Common myeloid progenitor, CD34-positive (primary cell): ENCODE measurements at regions of chr19 and their contacts with region 1.

Region 1: GRCh38 chr19:54390942-54391577 is 24.2 kb upstream of the TTYH1 start:
- DNase-seq: peak; percentile 85 to 91 (median 87)
- H3K4me3 ChIP-seq: peak overlapping the region in 2 of 7 experiments; percentile 0 to 8
- H3K27ac ChIP-seq: no peak overlapping the region
- H3K4me1 ChIP-seq: peaks cover 21 to 50% (median 46%) of the 10 kb centered on the region in 4 experiments
- H3K27me3 ChIP-seq: no peaks in the 10 kb centered on the region

Region 2: DNA sequence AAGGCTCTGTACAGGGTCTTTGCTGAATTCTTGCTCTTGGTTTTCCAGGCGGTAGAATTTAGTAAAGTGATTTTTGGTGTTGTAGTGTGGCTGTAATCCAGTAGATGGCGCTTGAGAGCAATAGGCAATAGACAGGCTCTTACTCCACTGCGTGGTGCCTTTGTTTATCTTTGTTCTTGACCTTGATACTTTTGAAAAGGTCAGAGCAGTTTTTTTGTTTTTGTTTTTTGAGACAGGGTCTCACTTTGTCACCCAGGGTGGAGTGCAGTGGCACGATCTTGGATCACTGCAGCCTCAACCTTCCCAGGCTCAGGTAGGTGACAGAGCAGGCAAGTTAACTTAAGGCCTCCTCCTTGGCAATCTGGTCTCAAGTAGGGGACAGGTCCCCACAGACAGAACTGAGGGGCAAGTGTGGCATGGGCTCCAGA is 65.9 kb before region 1 on chr19:
- CTCF ChIA-PET with region 1: interaction called, 86 read pairs
- POLR2A ChIA-PET with region 1: no interaction called
- DNase-seq: peak; percentile 58 to 81 (median 68)
- H3K4me3 ChIP-seq: no peak overlapping the region
- H3K27ac ChIP-seq: no peak overlapping the region
- H3K4me1 ChIP-seq: peaks cover 0 to 21% (median 8%) of the 10 kb centered on the region in 4 experiments
- H3K27me3 ChIP-seq: no peaks in the 10 kb centered on the region

Region 3: GRCh38 chr19:54364775-54365257 is 26.2 kb before region 1 on chr19 and contains the start of gene LAIR1:
- CTCF ChIA-PET with region 1: interaction called, 61 read pairs
- POLR2A ChIA-PET with region 1: interaction called, 22 read pairs
- DNase-seq: peak; percentile 54 to 85 (median 82)
- H3K4me3 ChIP-seq: peak within 1 kb of the TSS; percentile 34 to 88 (median 76)
- H3K27ac ChIP-seq: peak within 1 kb of the TSS; percentile 72 to 78
- H3K4me1 ChIP-seq: peaks cover 43 to 80% (median 67%) of the 10 kb centered on the region in 4 experiments
- H3K27me3 ChIP-seq: no peaks in the 10 kb centered on the region

Region 4: GRCh38 chr19:54379187-54379678 is 11.8 kb before region 1 on chr19:
- CTCF ChIA-PET with region 1: interaction called, 22 read pairs
- POLR2A ChIA-PET with region 1: interaction called, 15 read pairs
- DNase-seq: no peak
- H3K4me3 ChIP-seq: peak overlapping the region in 1 of 7 experiments; percentile 64
- H3K27ac ChIP-seq: peak overlapping the region; percentile 81 to 89
- H3K4me1 ChIP-seq: peaks cover 21 to 61% (median 57%) of the 10 kb centered on the region in 4 experiments
- H3K27me3 ChIP-seq: no peaks in the 10 kb centered on the region